ENCODE measurements at regions of chr1 and their contacts with region 1.

Region 1: GRCh38 chr1:100895540-100896483 is at the start of gene SLC30A7:
- DNase-seq: peak; percentile 95
- H3K4me3 Mint-ChIP-seq: peak within 1 kb of the TSS; percentile 93
- H3K27ac Mint-ChIP-seq: peak within 1 kb of the TSS; percentile 96
- H3K4me1 Mint-ChIP-seq: peaks cover 64% of the 10 kb centered on the region
- H3K27me3 Mint-ChIP-seq: no peaks in the 10 kb centered on the region
- total RNA-seq, gene SLC30A7: 42.6 and 51.2 TPM in 2 replicates

Region 2: DNA sequence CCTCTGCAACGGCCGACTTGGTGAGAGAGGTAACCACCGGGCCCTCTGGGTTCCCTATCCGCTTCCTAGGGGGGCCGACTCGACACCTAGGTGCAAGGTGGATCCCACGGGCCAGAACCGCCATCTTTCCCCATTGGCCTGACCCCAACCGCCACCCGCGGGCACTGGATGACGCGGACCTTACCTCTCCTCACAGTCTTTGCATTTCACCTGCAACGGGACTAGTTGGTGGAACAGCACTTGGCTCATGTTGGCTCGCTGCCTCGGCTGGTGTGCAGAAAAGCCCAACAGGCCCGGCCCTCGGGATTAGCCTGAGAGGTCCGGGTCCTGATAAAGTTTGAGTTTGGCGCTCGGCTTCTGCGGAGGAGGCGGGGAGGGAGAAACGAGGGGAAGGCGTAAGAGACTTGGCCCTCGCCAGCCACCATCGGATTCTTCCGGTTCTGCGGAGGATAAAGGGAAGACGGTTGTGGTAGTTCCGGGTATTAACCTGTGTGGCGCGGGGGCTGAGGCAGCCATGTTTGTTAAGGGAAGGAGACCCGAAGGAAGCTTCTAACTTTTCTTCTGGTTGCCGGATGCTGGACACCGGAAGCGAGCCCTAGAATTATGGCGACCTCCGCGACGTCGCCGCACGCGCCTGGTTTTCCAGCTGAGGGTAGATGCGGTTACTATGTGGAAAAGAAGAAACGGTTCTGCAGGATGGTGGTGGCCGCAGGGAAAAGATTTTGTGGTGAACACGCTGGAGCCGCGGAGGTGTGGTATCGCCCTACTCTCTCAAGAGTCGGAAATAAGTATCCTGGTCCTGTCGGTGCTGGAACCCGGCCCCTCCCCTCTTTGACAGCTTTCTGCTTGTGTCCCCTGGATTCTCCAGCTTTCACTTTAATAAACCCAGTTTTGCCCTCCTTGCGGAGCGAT is 763.0 kb before region 1 on chr1 and contains the starts of genes SASS6 and TRMT13:
- intact Hi-C with region 1: loop called (anchors 1 kb)
- DNase-seq: peak; percentile 93
- H3K4me3 Mint-ChIP-seq: peak within 1 kb of the TSS; percentile 99
- H3K27ac Mint-ChIP-seq: peak within 1 kb of the TSS; percentile 98
- H3K4me1 Mint-ChIP-seq: peaks cover 56% of the 10 kb centered on the region
- H3K27me3 Mint-ChIP-seq: no peaks in the 10 kb centered on the region
- total RNA-seq, gene SASS6: 16.4 and 16.7 TPM in 2 replicates
- total RNA-seq, gene TRMT13: 21.8 and 25.0 TPM in 2 replicates

Region 3: GRCh38 chr1:100377590-100378361 is 518.0 kb before region 1 on chr1:
- intact Hi-C with region 1: loop called (anchors 1 kb)
- DNase-seq: no peak
- H3K4me3 Mint-ChIP-seq: peak overlapping the region; percentile 38
- H3K27ac Mint-ChIP-seq: peak overlapping the region; percentile 75
- H3K4me1 Mint-ChIP-seq: peaks cover 55% of the 10 kb centered on the region
- H3K27me3 Mint-ChIP-seq: peaks cover 2% of the 10 kb centered on the region

Region 4: DNA sequence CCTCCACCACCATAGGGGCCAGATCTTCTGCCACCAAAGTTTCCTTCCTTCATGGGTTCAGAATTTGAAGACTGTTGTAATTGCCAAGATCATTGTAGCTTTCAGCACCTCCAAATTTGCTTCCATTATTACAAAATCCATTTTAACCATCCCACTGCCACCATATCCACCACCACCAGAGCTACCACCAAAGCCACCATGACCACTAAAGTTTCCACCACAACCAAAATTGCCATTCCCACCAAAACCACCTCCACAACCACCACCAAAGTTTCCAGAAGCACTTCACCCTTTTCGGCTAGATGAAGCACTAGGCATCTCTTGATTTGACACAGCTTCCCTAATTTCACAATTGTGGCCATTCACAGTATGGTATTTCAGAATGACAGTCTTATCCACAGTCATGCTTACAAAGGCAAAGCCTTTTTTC is 45.3 kb after region 1 on chr1:
- intact Hi-C with region 1: loop called (anchors 2 kb)
- DNase-seq: peak; percentile 17
- H3K4me3 Mint-ChIP-seq: peak overlapping the region; percentile 58
- H3K27ac Mint-ChIP-seq: peak overlapping the region; percentile 99
- H3K4me1 Mint-ChIP-seq: peaks cover 37% of the 10 kb centered on the region
- H3K27me3 Mint-ChIP-seq: peaks cover 3% of the 10 kb centered on the region

Region 5: DNA sequence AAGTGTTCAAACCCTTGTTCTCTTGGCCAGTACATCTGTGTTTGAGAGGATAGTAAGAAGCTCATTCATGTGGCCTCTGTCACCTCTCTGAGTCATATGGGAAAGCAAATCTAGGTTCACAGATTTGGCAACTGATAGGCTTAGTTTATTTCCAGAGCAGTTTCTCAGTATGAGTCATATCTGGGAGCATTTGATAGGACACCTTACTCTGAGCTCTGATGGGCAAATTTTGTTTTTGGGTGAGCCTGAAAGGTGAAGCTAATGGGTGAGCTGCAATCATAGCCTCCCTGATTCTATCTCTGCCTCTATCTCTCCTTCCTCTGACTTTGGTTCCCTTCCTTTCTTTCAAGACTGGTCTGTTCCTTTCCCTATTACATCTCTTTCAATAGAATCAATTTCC is 475.4 kb after region 1 on chr1:
- intact Hi-C with region 1: loop called (anchors 1 kb)
- DNase-seq: peak; percentile 33
- H3K4me3 Mint-ChIP-seq: peak overlapping the region; percentile 40
- H3K27ac Mint-ChIP-seq: no peak overlapping the region
- H3K4me1 Mint-ChIP-seq: peaks cover 12% of the 10 kb centered on the region
- H3K27me3 Mint-ChIP-seq: peaks cover 14% of the 10 kb centered on the region

Region 6: GRCh38 chr1:102032534-102032933 is 1136.7 kb after region 1 on chr1:
- intact Hi-C with region 1: no loop called
- DNase-seq: no peak
- H3K4me3 Mint-ChIP-seq: no peak overlapping the region
- H3K27ac Mint-ChIP-seq: no peak overlapping the region
- H3K4me1 Mint-ChIP-seq: no peaks in the 10 kb centered on the region
- H3K27me3 Mint-ChIP-seq: no peaks in the 10 kb centered on the region

Measured in activated T-helper 1 cell treated with anti-CD3 and anti-CD28 coated beads, Interleukin-12 subunit alpha, Interleukin-12 subunit beta, Interleukin-2, Interleukin-4 antibody, amounts not matched to agents 30 ng/mL and 10 ng/mL and 1 ng/mL, durations not matched to agents 14 hours and 24 hours and 36 hours (primary cell).